PC-9 (cell line): ENCODE measurements at regions of chr3 and their contacts with region 1.

Region 1: GRCh38 chr3:172705170-172705569 is 5.7 kb downstream of the NCEH1 start:
- DNase-seq: no peak
- H3K4me3 ChIP-seq: no peak overlapping the region
- H3K27ac ChIP-seq: no peak overlapping the region
- H3K4me1 ChIP-seq: peaks cover 29% of the 10 kb centered on the region
- H3K27me3 ChIP-seq: no peaks in the 10 kb centered on the region
- CTCF ChIP-seq: no peak

Region 2: GRCh38 chr3:172286508-172287148 is 418.5 kb before region 1 on chr3:
- CTCF ChIA-PET with region 1: interaction called, 14 read pairs
- POLR2A ChIA-PET with region 1: no interaction called
- intact Hi-C with region 1: no loop called
- DNase-seq: no peak
- H3K4me3 ChIP-seq: no peak overlapping the region
- H3K27ac ChIP-seq: peak overlapping the region; percentile 35
- H3K4me1 ChIP-seq: peaks cover 28% of the 10 kb centered on the region
- H3K27me3 ChIP-seq: no peaks in the 10 kb centered on the region
- CTCF ChIP-seq: no peak